A549 (cell line): ENCODE measurements at regions of chr2 and their contacts with region 1.

Region 1: DNA sequence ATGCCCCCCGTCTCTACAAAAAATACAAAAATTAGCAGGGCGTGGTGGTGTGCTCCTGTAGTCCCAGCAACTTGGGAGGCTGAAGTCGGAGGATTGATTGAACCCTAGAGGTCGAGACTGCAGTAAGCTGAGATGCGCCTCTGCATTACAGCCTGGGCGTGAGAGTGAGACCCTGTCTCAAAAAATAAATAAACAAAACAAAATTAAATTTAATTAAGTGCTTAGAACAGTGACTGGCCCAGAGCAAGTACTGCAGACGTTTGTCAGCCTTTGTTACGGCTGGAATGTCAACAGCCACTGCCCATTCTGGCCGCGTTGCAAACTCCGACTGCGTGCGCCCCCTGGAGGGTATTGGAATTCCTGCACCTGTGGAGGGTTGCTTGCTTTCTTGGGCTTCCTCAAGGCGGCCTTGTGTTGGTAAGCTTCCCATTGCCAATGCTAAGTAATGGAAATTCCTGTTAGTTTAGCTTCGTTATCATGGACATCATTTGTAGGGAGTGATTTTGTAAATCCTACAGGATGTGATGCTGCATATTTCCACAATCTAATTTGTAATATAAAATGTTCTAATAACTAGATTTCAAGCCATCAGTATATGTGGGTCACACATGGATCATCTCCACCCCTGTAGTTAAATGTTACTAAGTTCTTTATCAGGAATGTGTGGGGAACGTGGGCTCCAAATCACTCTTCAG is 15.9 kb upstream of the ATP6V1B1 start:
- DNase-seq: peak; percentile 77 to 87
- ATAC-seq: peak; percentile 90 to 95
- H3K4me3 ChIP-seq: no peak overlapping the region
- H3K27ac ChIP-seq: no peak overlapping the region
- H3K4me1 ChIP-seq: no peaks in the 10 kb centered on the region
- CTCF ChIP-seq: peak; percentile 97
- EP300 ChIP-seq: no peak
- POLR2A ChIP-seq: no peak
- RAD21 ChIP-seq: peak; percentile 81 to 89

Region 2: DNA sequence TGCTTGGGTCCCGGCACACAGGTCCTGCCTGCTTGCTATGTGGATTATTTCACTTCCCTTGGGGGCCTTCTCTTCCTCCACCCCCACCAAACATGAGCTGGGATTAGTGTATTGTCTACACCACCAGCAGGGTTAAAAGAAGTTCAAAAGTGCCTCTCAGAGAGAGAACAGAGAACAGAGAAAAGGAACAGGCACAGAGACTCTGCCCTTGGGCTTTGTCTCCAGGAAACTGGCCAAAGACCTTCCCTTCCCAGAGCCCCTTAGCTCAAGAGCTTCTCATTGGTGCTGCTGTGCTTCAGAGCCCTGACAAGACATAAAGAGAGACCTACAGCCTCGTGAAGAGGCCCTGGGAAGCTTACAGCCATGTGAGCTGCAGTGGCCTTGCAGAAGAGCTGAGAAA is 122.3 kb before region 1 on chr2:
- CTCF ChIA-PET with region 1: interaction called, 10 read pairs
- POLR2A ChIA-PET with region 1: no interaction called
- DNase-seq: no peak
- ATAC-seq: no peak
- H3K4me3 ChIP-seq: no peak overlapping the region
- H3K27ac ChIP-seq: no peak overlapping the region
- H3K4me1 ChIP-seq: no peaks in the 10 kb centered on the region
- CTCF ChIP-seq: no peak
- EP300 ChIP-seq: no peak
- POLR2A ChIP-seq: no peak
- RAD21 ChIP-seq: no peak

Region 3: DNA sequence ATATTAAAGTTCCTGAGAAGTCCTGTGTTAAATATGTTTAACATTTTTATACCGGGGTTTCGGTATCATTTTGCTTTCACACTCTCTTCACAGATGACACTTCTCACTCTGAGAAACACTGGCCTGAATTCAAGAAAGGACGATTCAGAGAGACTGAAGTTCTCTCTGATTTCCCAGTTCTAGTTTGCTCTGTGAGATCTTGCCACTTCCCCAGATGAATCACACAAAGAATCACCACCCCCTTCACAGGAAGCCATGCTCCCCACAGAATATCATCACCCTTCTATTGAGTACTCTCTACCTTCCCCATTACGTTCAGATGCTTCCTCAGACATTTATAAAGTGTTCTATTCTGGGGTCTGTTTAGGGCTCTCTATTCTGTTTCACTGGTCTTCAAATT is 68.1 kb before region 1 on chr2:
- CTCF ChIA-PET with region 1: interaction called, 12 read pairs
- POLR2A ChIA-PET with region 1: no interaction called
- DNase-seq: no peak
- ATAC-seq: no peak
- H3K4me3 ChIP-seq: no peak overlapping the region
- H3K27ac ChIP-seq: no peak overlapping the region
- H3K4me1 ChIP-seq: no peaks in the 10 kb centered on the region
- CTCF ChIP-seq: no peak
- EP300 ChIP-seq: no peak
- POLR2A ChIP-seq: no peak
- RAD21 ChIP-seq: no peak

Region 4: GRCh38 chr2:70907130-70908057 is 12.4 kb before region 1 on chr2:
- CTCF ChIA-PET with region 1: interaction called, 20 read pairs
- POLR2A ChIA-PET with region 1: no interaction called
- DNase-seq: no peak
- ATAC-seq: no peak
- H3K4me3 ChIP-seq: no peak overlapping the region
- H3K27ac ChIP-seq: no peak overlapping the region
- H3K4me1 ChIP-seq: peaks cover 6% of the 10 kb centered on the region
- CTCF ChIP-seq: no peak
- EP300 ChIP-seq: no peak
- POLR2A ChIP-seq: no peak
- RAD21 ChIP-seq: no peak